GM12878 (cell line): ENCODE measurements at regions of chr16 and their contacts with region 1.

Region 1: GRCh38 chr16:89422905-89423630 is 67.3 kb downstream of the ANKRD11 start:
- DNase-seq: peak; percentile 72
- ATAC-seq: peak; percentile 92
- H3K4me3 ChIP-seq: peak overlapping the region; percentile 55; the same call in 1 of the 2 replicates
- H3K27ac ChIP-seq: peak overlapping the region; percentile 69
- H3K4me1 ChIP-seq: peaks cover 66% of the 10 kb centered on the region
- H3K27me3 ChIP-seq: no peaks in the 10 kb centered on the region
- CTCF ChIP-seq: no peak
- EP300 ChIP-seq: peak in 1 of 2 experiments; percentile 47; a peak in 2 of 4 replicates
- POLR2A ChIP-seq: peak; percentile 55
- RAD21 ChIP-seq: no peak

Region 2: GRCh38 chr16:89484923-89485679 is 62.0 kb after region 1 on chr16:
- CTCF ChIA-PET with region 1: no interaction called
- POLR2A ChIA-PET with region 1: interaction called, 4 read pairs
- RAD21 ChIA-PET with region 1: interaction called, 6 read pairs
- SMC1A ChIA-PET with region 1: interaction called, 5 read pairs
- in situ Hi-C with region 1: no loop called
- intact Hi-C with region 1: loop called (anchors 2 kb)
- DNase-seq: peak; percentile 41
- ATAC-seq: peak; percentile 57
- H3K4me3 ChIP-seq: peak overlapping the region; percentile 69
- H3K27ac ChIP-seq: peak overlapping the region; percentile 92
- H3K4me1 ChIP-seq: peaks cover 60% of the 10 kb centered on the region
- H3K27me3 ChIP-seq: no peaks in the 10 kb centered on the region
- CTCF ChIP-seq: no peak
- EP300 ChIP-seq: no peak; a peak in 1 of 4 replicates
- POLR2A ChIP-seq: peak; percentile 44; the same call in 1 of the 2 replicates
- RAD21 ChIP-seq: no peak